AG04450 (cell line): ENCODE measurements at regions of chr2 and their contacts with region 1.

Region 1: GRCh38 chr2:110812726-110813645 is 80.6 kb downstream of the ACOXL start:
- DNase-seq: no peak
- H3K4me3 ChIP-seq: no peak overlapping the region
- H3K27ac ChIP-seq: no peak overlapping the region
- H3K27me3 ChIP-seq: peaks cover 14% of the 10 kb centered on the region
- CTCF ChIP-seq: no peak

Region 2: GRCh38 chr2:110662560-110662959 is 150.4 kb before region 1 on chr2:
- CTCF ChIA-PET with region 1: no interaction called
- POLR2A ChIA-PET with region 1: no interaction called
- DNase-seq: no peak
- H3K4me3 ChIP-seq: no peak overlapping the region
- H3K27ac ChIP-seq: no peak overlapping the region
- H3K27me3 ChIP-seq: no peaks in the 10 kb centered on the region
- CTCF ChIP-seq: no peak

Region 3: DNA sequence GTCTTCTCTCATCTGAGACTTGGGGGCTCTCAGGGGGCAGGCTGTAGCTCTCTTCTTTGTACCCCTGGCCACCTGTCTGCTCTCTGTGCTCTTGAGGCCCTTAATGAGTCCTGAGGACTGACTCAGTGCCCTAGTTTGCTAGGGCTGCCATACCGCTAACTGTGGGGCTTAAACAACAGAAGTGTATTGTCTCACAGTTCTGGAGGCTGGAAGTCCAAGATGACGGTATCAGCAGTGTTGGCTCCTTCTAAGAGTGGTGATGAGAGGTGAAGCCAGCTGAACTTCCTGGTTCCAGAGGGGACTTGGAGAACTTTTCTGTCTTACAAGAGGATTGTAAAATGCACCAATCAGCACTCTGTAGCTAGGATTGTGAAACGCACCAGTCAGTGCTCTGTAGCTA is 13.6 kb before region 1 on chr2:
- CTCF ChIA-PET with region 1: interaction called, 11 read pairs
- POLR2A ChIA-PET with region 1: no interaction called
- DNase-seq: no peak
- H3K4me3 ChIP-seq: no peak overlapping the region
- H3K27ac ChIP-seq: no peak overlapping the region
- H3K27me3 ChIP-seq: peaks cover 31% of the 10 kb centered on the region
- CTCF ChIP-seq: no peak

Region 4: DNA sequence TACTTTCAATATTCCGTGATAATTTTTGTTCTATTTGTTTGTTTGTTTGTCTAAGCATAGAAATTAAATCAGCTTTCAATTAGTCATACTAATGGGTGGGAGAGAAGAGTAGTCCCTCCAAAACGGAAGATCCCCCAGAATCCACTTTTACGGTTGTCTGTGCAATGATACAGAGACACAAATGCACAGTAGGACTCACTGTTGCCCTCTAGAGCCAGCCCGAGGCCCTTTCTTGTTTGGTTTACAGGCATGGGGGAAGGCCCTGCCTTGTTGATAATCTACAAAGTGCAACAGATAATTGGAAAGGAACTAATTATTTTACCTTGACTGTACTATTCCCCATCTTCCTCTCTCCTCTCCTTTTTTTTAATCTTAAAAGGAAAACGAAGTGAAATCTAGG is 40.5 kb after region 1 on chr2:
- CTCF ChIA-PET with region 1: no interaction called
- POLR2A ChIA-PET with region 1: no interaction called
- DNase-seq: no peak
- H3K4me3 ChIP-seq: no peak overlapping the region
- H3K27ac ChIP-seq: no peak overlapping the region
- H3K27me3 ChIP-seq: peaks cover 12% of the 10 kb centered on the region
- CTCF ChIP-seq: peak; percentile 62

Region 5: GRCh38 chr2:111698743-111699554 is 886.0 kb after region 1 on chr2:
- CTCF ChIA-PET with region 1: interaction called, 10 read pairs
- POLR2A ChIA-PET with region 1: no interaction called
- DNase-seq: peak; percentile 96
- H3K4me3 ChIP-seq: no peak overlapping the region
- H3K27ac ChIP-seq: peak overlapping the region; percentile 71
- H3K27me3 ChIP-seq: peaks cover 2% of the 10 kb centered on the region
- CTCF ChIP-seq: peak; percentile 48